CD4-positive, alpha-beta T cell (primary cell): ENCODE measurements at regions of chr6 and their contacts with region 1.

Region 1: GRCh38 chr6:75934643-75935472 is 137.6 kb downstream of the IMPG1 start:
- DNase-seq: peak in 6 of 14 experiments; percentile 1 to 52 (median 32)
- ATAC-seq: peak; percentile 51
- H3K4me3 ChIP-seq: peak overlapping the region; percentile 31
- H3K4me3 Mint-ChIP-seq: peak overlapping the region; percentile 62
- H3K27ac ChIP-seq: no peak overlapping the region
- H3K27ac Mint-ChIP-seq: no peak overlapping the region
- H3K4me1 ChIP-seq: peaks cover 11% of the 10 kb centered on the region
- H3K4me1 Mint-ChIP-seq: peaks cover 6% of the 10 kb centered on the region
- H3K27me3 ChIP-seq: peaks cover 4 to 21% of the 10 kb centered on the region in 2 experiments
- H3K27me3 Mint-ChIP-seq: peaks cover 23% of the 10 kb centered on the region
- CTCF ChIP-seq: peak; percentile 53

Region 2: GRCh38 chr6:75946146-75946831 is 11.4 kb after region 1 on chr6:
- CTCF ChIA-PET with region 1: no interaction called
- POLR2A ChIA-PET with region 1: no interaction called
- intact Hi-C with region 1: no loop called
- DNase-seq: no peak
- ATAC-seq: no peak
- H3K4me3 ChIP-seq: no peak overlapping the region
- H3K4me3 Mint-ChIP-seq: no peak overlapping the region
- H3K27ac ChIP-seq: no peak overlapping the region
- H3K27ac Mint-ChIP-seq: no peak overlapping the region
- H3K4me1 ChIP-seq: no peaks in the 10 kb centered on the region
- H3K4me1 Mint-ChIP-seq: no peaks in the 10 kb centered on the region
- H3K27me3 ChIP-seq: no peaks in the 10 kb centered on the region
- H3K27me3 Mint-ChIP-seq: peaks cover 12% of the 10 kb centered on the region
- CTCF ChIP-seq: no peak

Region 3: DNA sequence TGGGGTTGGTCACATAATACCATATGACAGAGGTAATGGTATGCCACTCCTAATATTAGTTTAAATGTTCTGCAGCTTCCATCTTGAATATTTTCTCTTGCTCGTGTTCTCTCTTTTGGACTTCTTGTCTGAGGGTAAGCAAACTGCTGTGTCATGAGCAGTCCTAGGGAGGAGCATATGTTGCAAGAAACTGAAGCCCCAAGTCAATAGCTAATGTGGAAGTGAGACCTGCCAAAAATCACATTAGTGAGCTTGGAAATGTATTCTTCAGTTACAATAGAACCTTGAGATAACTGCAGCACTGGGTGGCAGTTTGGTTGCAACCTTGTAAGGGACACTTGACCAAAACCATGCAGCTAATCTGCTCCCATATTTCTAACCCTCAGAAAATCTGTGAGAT is 315.8 kb after region 1 on chr6:
- CTCF ChIA-PET with region 1: no interaction called
- POLR2A ChIA-PET with region 1: no interaction called
- intact Hi-C with region 1: no loop called
- DNase-seq: no peak
- ATAC-seq: no peak
- H3K4me3 ChIP-seq: no peak overlapping the region
- H3K4me3 Mint-ChIP-seq: no peak overlapping the region
- H3K27ac ChIP-seq: no peak overlapping the region
- H3K27ac Mint-ChIP-seq: no peak overlapping the region
- H3K4me1 ChIP-seq: no peaks in the 10 kb centered on the region
- H3K4me1 Mint-ChIP-seq: no peaks in the 10 kb centered on the region
- H3K27me3 ChIP-seq: no peaks in the 10 kb centered on the region
- H3K27me3 Mint-ChIP-seq: no peaks in the 10 kb centered on the region
- CTCF ChIP-seq: no peak

Region 4: GRCh38 chr6:76697585-76697984 is 762.7 kb after region 1 on chr6:
- CTCF ChIA-PET with region 1: no interaction called
- POLR2A ChIA-PET with region 1: no interaction called
- intact Hi-C with region 1: no loop called
- DNase-seq: no peak
- ATAC-seq: no peak
- H3K4me3 ChIP-seq: no peak overlapping the region
- H3K4me3 Mint-ChIP-seq: no peak overlapping the region
- H3K27ac ChIP-seq: no peak overlapping the region
- H3K27ac Mint-ChIP-seq: no peak overlapping the region
- H3K4me1 ChIP-seq: no peaks in the 10 kb centered on the region
- H3K4me1 Mint-ChIP-seq: no peaks in the 10 kb centered on the region
- H3K27me3 ChIP-seq: no peaks in the 10 kb centered on the region
- H3K27me3 Mint-ChIP-seq: no peaks in the 10 kb centered on the region
- CTCF ChIP-seq: no peak

Region 5: GRCh38 chr6:77466055-77466450 is 1531.2 kb after region 1 on chr6:
- CTCF ChIA-PET with region 1: no interaction called
- POLR2A ChIA-PET with region 1: no interaction called
- intact Hi-C with region 1: loop called in 1 of 2 experiments (anchors 10 kb)
- DNase-seq: peak in 3 of 14 experiments; percentile 14 to 35 (median 23)
- ATAC-seq: no peak
- H3K4me3 ChIP-seq: peak overlapping the region; percentile 56
- H3K4me3 Mint-ChIP-seq: peak overlapping the region; percentile 74
- H3K27ac ChIP-seq: no peak overlapping the region
- H3K27ac Mint-ChIP-seq: no peak overlapping the region
- H3K4me1 ChIP-seq: peaks cover 27% of the 10 kb centered on the region
- H3K4me1 Mint-ChIP-seq: peaks cover 15% of the 10 kb centered on the region
- H3K27me3 ChIP-seq: peaks cover 52 to 56% of the 10 kb centered on the region in 2 experiments
- H3K27me3 Mint-ChIP-seq: peaks cover 63% of the 10 kb centered on the region
- CTCF ChIP-seq: no peak